ENCODE measurements at regions of chr6 and their contacts with region 1.

Region 1: GRCh38 chr6:150891888-150892485 is 26.5 kb downstream of the MTHFD1L start:
- DNase-seq: peak; percentile 64 to 89 (median 84)
- H3K4me3 ChIP-seq: no peak overlapping the region
- H3K27ac ChIP-seq: peak overlapping the region in 1 of 2 donors; percentile 14
- H3K4me1 ChIP-seq: peaks cover 9% of the 10 kb centered on the region
- H3K27me3 ChIP-seq: no peaks in the 10 kb centered on the region
- CTCF ChIP-seq: peak; percentile 61 to 91 (median 88)
- EP300 ChIP-seq: no peak
- POLR2A ChIP-seq: no peak

Region 2: DNA sequence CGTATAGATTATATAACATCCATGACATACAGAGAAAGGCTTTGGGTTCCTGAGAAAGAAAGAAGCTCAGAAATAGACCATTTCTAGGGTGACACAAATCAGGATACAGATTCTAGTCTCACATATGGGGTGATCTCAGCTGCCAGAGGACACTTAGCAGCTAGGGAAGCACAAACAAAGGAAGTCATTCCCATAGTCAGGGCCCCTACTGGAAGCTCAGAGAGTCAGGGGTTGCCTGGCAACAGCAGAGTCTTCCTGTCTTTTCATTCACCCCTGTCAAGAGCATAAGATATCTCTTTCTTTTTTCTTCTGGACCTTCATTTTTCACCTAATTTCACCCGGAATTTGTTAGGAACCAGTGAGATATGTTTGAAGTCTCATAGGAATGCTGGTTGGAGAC is 605.1 kb before region 1 on chr6:
- intact Hi-C with region 1: no loop called
- DNase-seq: no peak
- H3K4me3 ChIP-seq: no peak overlapping the region
- H3K27ac ChIP-seq: no peak overlapping the region
- H3K4me1 ChIP-seq: no peaks in the 10 kb centered on the region
- H3K27me3 ChIP-seq: no peaks in the 10 kb centered on the region
- CTCF ChIP-seq: no peak
- EP300 ChIP-seq: no peak
- POLR2A ChIP-seq: no peak

Region 3: GRCh38 chr6:150806811-150807210 is 85.2 kb before region 1 on chr6:
- intact Hi-C with region 1: no loop called
- DNase-seq: no peak
- H3K4me3 ChIP-seq: no peak overlapping the region
- H3K27ac ChIP-seq: no peak overlapping the region
- H3K4me1 ChIP-seq: no peaks in the 10 kb centered on the region
- H3K27me3 ChIP-seq: no peaks in the 10 kb centered on the region
- CTCF ChIP-seq: no peak
- EP300 ChIP-seq: no peak
- POLR2A ChIP-seq: no peak

Region 4: GRCh38 chr6:150999107-150999506 is 107.1 kb after region 1 on chr6:
- intact Hi-C with region 1: loop called in 3 of 4 experiments (anchors 5 to 10 kb)
- DNase-seq: no peak
- H3K4me3 ChIP-seq: no peak overlapping the region
- H3K27ac ChIP-seq: peak overlapping the region in 1 of 2 donors; percentile 74
- H3K4me1 ChIP-seq: peaks cover 16% of the 10 kb centered on the region
- H3K27me3 ChIP-seq: no peaks in the 10 kb centered on the region
- CTCF ChIP-seq: no peak
- EP300 ChIP-seq: no peak
- POLR2A ChIP-seq: no peak

Region 5: DNA sequence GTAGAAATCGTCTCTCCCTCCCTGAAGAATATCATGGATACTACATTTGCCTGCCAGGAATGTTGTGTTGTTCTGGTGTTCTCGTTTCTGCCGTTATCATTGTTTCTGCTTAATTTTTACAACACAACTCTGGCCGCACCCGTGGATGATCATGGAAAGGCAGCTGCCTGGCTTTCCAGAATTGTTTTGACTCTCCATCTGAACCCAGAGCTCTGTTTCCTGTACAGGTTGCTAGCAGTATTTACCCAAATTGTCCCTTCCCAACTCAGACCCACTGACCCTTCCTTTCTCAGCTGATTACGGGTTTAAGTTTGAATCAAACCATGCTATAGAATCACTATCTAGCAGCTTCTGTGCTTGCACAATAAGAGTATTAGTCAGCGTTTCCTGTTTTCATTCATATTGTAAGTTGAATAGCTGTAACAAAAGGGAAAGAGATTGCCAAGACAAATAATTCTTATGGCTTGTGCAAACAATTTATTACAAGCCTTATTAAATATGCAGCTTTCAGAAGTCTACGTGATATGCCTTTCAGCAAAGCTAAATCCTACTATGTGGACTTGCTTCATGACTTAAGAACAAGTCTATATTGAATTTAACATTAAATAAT is 112.5 kb after region 1 on chr6:
- intact Hi-C with region 1: loop called in 3 of 4 experiments (anchors 5 to 10 kb)
- DNase-seq: peak in 2 of 5 donors; percentile 50 to 68
- H3K4me3 ChIP-seq: no peak overlapping the region
- H3K27ac ChIP-seq: peak overlapping the region; percentile 28 to 78
- H3K4me1 ChIP-seq: peaks cover 21% of the 10 kb centered on the region
- H3K27me3 ChIP-seq: no peaks in the 10 kb centered on the region
- CTCF ChIP-seq: no peak
- EP300 ChIP-seq: no peak
- POLR2A ChIP-seq: no peak

Region 6: DNA sequence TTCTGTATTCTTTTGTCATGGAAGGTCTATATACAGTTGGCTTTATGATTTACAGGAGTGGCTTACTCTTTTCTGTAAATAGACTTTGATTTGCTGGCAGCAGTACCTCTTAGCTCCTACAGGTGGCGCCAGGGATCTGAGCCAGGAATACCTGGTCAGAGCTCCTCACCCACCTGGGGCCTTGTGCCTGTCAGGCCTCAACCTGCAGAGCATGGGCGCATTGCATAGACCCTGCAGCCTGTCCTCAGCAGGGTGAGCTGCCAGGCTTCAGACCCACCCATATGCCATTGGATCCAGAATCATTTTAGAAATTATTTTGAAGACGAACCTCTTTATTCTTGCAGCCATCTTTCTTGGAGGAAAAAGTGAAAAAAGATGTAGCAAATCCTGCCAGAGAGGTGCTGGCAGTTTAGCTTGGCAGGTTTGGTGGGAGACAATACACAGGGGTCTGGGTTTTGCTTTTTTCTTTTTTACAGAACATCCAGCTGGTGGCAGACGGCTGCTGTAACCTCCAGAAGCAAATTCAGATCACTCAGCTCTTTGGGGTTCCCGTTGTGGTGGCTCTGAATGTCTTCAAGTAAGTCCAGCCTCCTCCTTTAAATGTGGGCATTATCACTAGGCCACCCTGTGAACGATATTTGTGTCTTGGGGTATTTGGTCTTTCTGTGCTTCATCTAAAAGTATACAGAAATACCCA is 122.6 kb after region 1 on chr6:
- intact Hi-C with region 1: loop called in 2 of 4 experiments (anchors 10 kb)
- DNase-seq: peak; percentile 60 to 82 (median 74)
- H3K4me3 ChIP-seq: no peak overlapping the region
- H3K27ac ChIP-seq: no peak overlapping the region
- H3K4me1 ChIP-seq: peaks cover 4% of the 10 kb centered on the region
- H3K27me3 ChIP-seq: no peaks in the 10 kb centered on the region
- CTCF ChIP-seq: peak; percentile 79 to 95 (median 95)
- EP300 ChIP-seq: no peak
- POLR2A ChIP-seq: no peak

Region 7: GRCh38 chr6:151044465-151045441 is 152.8 kb after region 1 on chr6:
- intact Hi-C with region 1: no loop called
- DNase-seq: peak; percentile 73 to 84 (median 80)
- H3K4me3 ChIP-seq: peak overlapping the region; percentile 4
- H3K27ac ChIP-seq: peak overlapping the region in 1 of 2 donors; percentile 64
- H3K4me1 ChIP-seq: peaks cover 10% of the 10 kb centered on the region
- H3K27me3 ChIP-seq: no peaks in the 10 kb centered on the region
- CTCF ChIP-seq: no peak
- EP300 ChIP-seq: peak; percentile 10
- POLR2A ChIP-seq: no peak

Region 8: DNA sequence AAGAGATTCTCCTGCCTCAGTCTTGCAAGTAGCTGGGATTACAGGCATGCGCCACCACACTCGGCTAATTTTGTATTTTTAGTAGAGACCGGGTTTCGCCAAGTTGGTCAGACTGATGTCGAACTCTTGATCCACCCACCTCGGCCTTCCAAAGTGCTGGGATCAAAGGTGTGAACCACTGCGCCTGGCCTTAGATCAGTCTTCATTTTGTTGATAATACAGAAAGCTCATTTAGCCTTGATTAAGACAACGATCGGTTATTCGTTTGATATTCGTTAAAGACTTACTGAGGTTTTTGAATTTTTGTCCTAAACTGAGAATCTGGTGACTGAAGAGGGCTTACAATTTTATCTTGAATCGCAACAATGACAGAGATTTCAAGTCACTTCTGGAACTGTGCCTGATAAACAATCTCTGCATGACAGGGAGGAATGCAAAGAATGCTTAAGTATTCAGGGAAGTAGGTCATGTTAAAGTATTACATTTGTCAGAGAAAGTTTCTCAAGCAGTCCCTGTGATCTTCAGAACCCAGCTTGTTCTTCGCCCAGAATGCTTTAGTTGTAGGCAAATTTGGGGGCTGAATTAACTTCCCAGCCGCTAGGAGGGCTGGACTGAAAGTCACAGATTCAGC is 362.6 kb after region 1 on chr6:
- intact Hi-C with region 1: loop called in 1 of 4 experiments (anchors 10 kb)
- DNase-seq: no peak
- H3K4me3 ChIP-seq: no peak overlapping the region
- H3K27ac ChIP-seq: no peak overlapping the region
- H3K4me1 ChIP-seq: peaks cover 5% of the 10 kb centered on the region
- H3K27me3 ChIP-seq: no peaks in the 10 kb centered on the region
- CTCF ChIP-seq: no peak
- EP300 ChIP-seq: no peak
- POLR2A ChIP-seq: no peak

Region 9: GRCh38 chr6:151323791-151324487 is 432.0 kb after region 1 on chr6:
- intact Hi-C with region 1: loop called in 1 of 4 experiments (anchors 5 kb)
- DNase-seq: peak; percentile 86 to 93 (median 93)
- H3K4me3 ChIP-seq: no peak overlapping the region
- H3K27ac ChIP-seq: peak overlapping the region; percentile 12 to 64
- H3K4me1 ChIP-seq: peaks cover 8% of the 10 kb centered on the region
- H3K27me3 ChIP-seq: no peaks in the 10 kb centered on the region
- CTCF ChIP-seq: peak; percentile 96 to 98 (median 97)
- EP300 ChIP-seq: peak; percentile 74
- POLR2A ChIP-seq: no peak

Region 10: GRCh38 chr6:151330134-151330696 is 438.2 kb after region 1 on chr6:
- intact Hi-C with region 1: loop called in 3 of 4 experiments (anchors 5 kb)
- DNase-seq: no peak
- H3K4me3 ChIP-seq: no peak overlapping the region
- H3K27ac ChIP-seq: no peak overlapping the region
- H3K4me1 ChIP-seq: peaks cover 3% of the 10 kb centered on the region
- H3K27me3 ChIP-seq: no peaks in the 10 kb centered on the region
- CTCF ChIP-seq: no peak
- EP300 ChIP-seq: no peak
- POLR2A ChIP-seq: no peak

Region 11: DNA sequence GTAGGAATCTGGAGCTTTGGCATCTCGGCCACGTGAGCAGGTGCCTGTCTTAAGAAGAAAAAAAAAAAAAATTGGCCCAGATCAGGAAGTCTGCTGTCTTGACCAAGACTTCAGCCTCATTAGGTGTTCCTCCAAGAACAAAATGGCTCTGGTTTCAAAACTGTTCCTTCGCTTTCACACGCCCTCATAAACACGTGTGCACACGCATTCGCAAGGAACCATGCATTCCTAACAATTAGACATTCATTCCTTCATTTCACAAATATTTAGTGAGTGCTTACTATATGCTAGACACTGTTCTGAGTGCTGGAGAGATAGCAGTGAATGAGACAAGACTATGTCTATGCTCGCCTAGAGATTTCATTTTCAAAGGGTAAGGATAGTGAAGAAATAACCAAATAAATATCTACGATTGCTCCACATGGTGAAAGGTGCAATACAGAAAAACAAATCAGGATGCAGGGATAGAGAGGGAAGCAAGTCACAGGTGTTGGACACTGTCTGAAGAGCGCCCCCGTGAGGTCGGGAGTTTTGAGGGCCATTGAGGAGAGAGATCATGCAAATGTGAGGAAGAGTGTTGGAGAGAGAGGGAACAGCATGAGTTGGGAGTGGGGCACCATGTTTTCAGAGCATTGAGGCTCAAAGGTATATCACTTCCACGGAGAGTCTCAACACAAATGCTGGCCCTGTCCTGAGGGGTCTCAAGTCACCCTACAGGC is 655.1 kb after region 1 on chr6:
- intact Hi-C with region 1: no loop called
- DNase-seq: no peak
- H3K4me3 ChIP-seq: no peak overlapping the region
- H3K27ac ChIP-seq: no peak overlapping the region
- H3K4me1 ChIP-seq: no peaks in the 10 kb centered on the region
- H3K27me3 ChIP-seq: no peaks in the 10 kb centered on the region
- CTCF ChIP-seq: no peak
- EP300 ChIP-seq: no peak
- POLR2A ChIP-seq: no peak